A549 (cell line): ENCODE measurements at regions of chr17 and their contacts with region 1.

Region 1: DNA sequence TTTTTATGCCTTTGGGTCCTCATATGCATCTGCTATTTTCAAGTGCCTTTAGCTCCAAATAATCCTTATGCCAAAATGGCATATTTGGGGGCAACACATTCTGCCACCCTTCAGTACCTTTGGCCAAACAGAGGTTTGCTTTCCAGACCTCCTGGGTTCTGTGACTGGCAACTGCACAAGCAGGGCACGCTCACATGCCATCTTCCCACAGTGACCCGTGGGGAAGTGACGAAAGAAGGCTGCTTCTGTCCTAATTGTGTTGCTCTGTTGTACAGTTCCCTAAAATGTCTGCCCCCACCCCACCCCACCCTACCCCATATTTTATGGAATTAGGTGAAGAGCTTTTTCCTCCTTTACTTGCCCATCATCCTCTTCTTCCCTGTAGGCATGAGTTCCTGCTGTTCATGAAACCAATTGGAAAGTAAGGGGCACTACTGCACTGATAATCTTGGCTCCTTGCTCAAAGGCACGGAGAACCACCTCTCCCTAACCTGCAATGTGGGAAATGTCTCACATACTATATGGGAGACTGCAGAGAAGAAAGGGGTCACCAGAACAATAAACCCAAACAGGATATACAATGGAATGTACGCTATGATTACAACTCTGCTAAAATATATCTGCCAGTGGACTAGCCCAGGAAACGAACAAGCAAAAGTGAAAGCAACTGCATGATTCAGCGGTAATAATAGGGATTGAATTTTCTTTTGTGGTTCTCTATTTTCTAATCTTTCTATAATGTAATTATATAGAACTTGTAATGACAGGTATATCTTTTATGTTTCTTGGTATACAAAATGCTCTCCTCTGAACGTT is 3.3 kb upstream of the SLFN12L start:
- DNase-seq: no peak
- ATAC-seq: peak; percentile 25 to 42; a peak in 3 of 6 replicates
- H3K4me3 ChIP-seq: 0 out of 3 replicates have a peak overlapping the region, but pooled peaks have one; percentile 5
- H3K27ac ChIP-seq: peak overlapping the region; percentile 26 to 56; a peak in 5 of 6 replicates
- H3K4me1 ChIP-seq: no peaks in the 10 kb centered on the region
- CTCF ChIP-seq: no peak
- EP300 ChIP-seq: no peak
- POLR2A ChIP-seq: no peak
- RAD21 ChIP-seq: no peak

Region 2: DNA sequence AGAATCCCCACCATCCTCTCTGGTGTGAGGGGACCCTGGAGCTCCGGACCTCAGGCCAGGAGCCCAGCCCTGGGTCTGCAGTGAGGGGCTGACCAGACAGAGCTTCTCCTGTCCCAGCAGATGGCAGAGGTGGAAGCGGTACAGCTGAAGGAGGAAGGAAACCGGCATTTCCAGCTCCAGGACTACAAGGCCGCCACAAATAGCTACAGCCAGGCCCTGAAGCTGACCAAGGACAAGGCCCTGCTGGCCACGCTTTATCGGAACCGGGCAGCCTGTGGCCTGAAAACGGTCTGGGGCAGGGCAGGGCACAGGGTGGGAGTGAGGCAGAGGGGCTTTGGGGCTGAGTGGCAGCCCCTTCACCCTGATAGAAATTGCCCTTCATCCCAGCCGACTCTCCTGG is 392.7 kb before region 1 on chr17:
- CTCF ChIA-PET with region 1: interaction called, 13 read pairs
- POLR2A ChIA-PET with region 1: no interaction called
- DNase-seq: no peak
- ATAC-seq: peak in 1 of 2 experiments; percentile 22; a peak in 2 of 6 replicates
- H3K4me3 ChIP-seq: no peak overlapping the region
- H3K27ac ChIP-seq: no peak overlapping the region
- H3K4me1 ChIP-seq: no peaks in the 10 kb centered on the region
- CTCF ChIP-seq: no peak
- EP300 ChIP-seq: no peak
- POLR2A ChIP-seq: no peak
- RAD21 ChIP-seq: no peak

Region 3: GRCh38 chr17:35242805-35243560 is 297.8 kb before region 1 on chr17 and contains the start of gene SLFN5:
- CTCF ChIA-PET with region 1: interaction called, 18 read pairs
- POLR2A ChIA-PET with region 1: no interaction called
- DNase-seq: peak; percentile 91 to 98
- ATAC-seq: peak; percentile 83 to 96
- H3K4me3 ChIP-seq: peak within 1 kb of the TSS; percentile 82
- H3K27ac ChIP-seq: peak within 1 kb of the TSS; percentile 88
- H3K4me1 ChIP-seq: peaks cover 40% of the 10 kb centered on the region
- CTCF ChIP-seq: no peak
- EP300 ChIP-seq: no peak
- POLR2A ChIP-seq: peak; percentile 91
- RAD21 ChIP-seq: no peak; a peak in 2 of 5 replicates
- polyA plus RNA-seq, gene SLFN5: 30.3 and 33.1 TPM in 2 replicates

Region 4: GRCh38 chr17:35387496-35387895 is 153.3 kb before region 1 on chr17:
- CTCF ChIA-PET with region 1: interaction called, 10 read pairs
- POLR2A ChIA-PET with region 1: no interaction called
- DNase-seq: no peak
- ATAC-seq: no peak
- H3K4me3 ChIP-seq: no peak overlapping the region
- H3K27ac ChIP-seq: no peak overlapping the region
- H3K4me1 ChIP-seq: no peaks in the 10 kb centered on the region
- CTCF ChIP-seq: no peak
- EP300 ChIP-seq: no peak
- POLR2A ChIP-seq: no peak
- RAD21 ChIP-seq: no peak

Region 5: DNA sequence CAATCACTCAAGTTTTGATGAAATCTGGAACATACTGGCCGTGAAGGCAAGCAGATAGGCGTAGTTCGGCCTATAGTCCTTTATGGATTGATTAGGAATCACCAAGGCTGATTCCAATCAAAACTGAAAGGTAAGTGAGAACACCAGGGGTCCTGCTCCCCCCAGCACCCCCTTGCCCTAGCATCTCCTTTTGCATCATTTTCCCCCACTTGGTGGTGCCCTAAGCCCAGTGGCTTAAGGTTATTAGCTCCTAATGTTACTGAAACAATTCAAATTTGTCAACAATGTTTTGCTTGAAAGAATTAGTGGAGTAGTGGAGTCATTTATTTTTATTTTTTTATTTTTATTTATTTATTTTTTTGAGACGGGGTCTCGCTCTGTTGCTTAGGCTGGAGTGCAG is 14.9 kb after region 1 on chr17:
- CTCF ChIA-PET with region 1: interaction called, 44 read pairs
- POLR2A ChIA-PET with region 1: no interaction called
- DNase-seq: no peak
- ATAC-seq: peak in 1 of 2 experiments; percentile 69; a peak in 3 of 6 replicates
- H3K4me3 ChIP-seq: no peak overlapping the region
- H3K27ac ChIP-seq: no peak overlapping the region
- H3K4me1 ChIP-seq: no peaks in the 10 kb centered on the region
- CTCF ChIP-seq: peak; percentile 40
- EP300 ChIP-seq: no peak
- POLR2A ChIP-seq: no peak
- RAD21 ChIP-seq: peak; percentile 46 to 53; a peak in 4 of 5 replicates

Region 6: GRCh38 chr17:35660902-35661301 is 120.1 kb after region 1 on chr17:
- CTCF ChIA-PET with region 1: no interaction called
- POLR2A ChIA-PET with region 1: no interaction called
- DNase-seq: no peak
- ATAC-seq: 0 out of 6 replicates have a peak, but pooled peaks of 1 of the 2 experiments have one; percentile 27
- H3K4me3 ChIP-seq: no peak overlapping the region
- H3K27ac ChIP-seq: no peak overlapping the region
- H3K4me1 ChIP-seq: no peaks in the 10 kb centered on the region
- CTCF ChIP-seq: no peak
- EP300 ChIP-seq: no peak
- POLR2A ChIP-seq: no peak
- RAD21 ChIP-seq: no peak